ENCODE measurements at regions of chr6 and their contacts with region 1.

Region 1: GRCh38 chr6:157021993-157022740 is 245.0 kb downstream of the ARID1B start:
- DNase-seq: peak; percentile 31
- ATAC-seq: peak; percentile 75
- H3K4me3 ChIP-seq: peak overlapping the region; percentile 75 to 79
- H3K27ac ChIP-seq: peak overlapping the region; percentile 81
- H3K4me1 ChIP-seq: peaks cover 5 to 14% of the 10 kb centered on the region in 2 experiments
- H3K27me3 ChIP-seq: no peaks in the 10 kb centered on the region
- CTCF ChIP-seq: no peak
- POLR2A ChIP-seq: peak; percentile 28
- RAD21 ChIP-seq: no peak

Region 2: DNA sequence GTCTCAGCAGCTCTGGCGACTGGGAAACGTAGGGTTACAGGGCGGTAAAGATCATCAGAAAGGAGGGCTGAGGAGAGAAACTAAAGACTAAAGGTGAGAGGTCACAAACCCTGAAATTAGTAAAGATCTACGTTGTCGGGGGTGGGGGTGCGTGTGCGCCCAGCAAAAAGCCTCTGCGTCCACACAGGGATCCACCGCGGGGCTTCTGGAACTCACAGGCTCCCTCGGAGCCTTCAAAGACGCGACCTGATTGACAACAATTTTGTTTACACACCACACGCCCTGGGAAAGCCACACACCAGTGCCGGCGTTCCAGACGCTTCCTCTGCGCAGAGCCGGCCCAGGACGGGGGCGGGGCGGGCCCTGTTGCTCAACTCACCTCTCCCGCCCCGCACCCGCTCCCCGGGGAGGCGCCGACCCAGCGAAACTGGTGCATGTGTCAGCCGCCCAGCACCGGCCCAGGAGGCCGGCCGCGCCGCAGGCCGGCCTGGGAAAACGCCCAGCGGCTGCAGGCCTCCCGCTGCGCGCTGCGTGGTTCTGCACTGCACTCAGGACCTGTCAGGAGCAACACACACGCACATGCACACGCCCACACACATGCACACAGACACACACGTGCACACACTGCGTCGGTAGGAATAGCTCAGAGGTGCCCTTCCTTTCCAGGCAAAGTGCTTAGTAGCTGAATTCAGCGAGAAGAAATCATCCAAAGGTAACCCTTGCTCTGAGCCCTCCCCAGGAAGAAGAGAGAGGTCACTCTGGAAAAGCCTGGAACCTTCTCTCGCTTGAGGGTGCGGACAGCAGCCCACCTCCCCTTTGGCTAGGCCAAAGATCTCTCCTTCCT is 302.2 kb before region 1 on chr6:
- CTCF ChIA-PET with region 1: no interaction called
- POLR2A ChIA-PET with region 1: no interaction called
- RAD21 ChIA-PET with region 1: no interaction called
- intact Hi-C with region 1: loop called (anchors 2 kb)
- DNase-seq: peak; percentile 72
- ATAC-seq: peak; percentile 90
- H3K4me3 ChIP-seq: peak overlapping the region; percentile 29 to 40
- H3K27ac ChIP-seq: peak overlapping the region; percentile 71
- H3K4me1 ChIP-seq: peaks cover 32 to 34% of the 10 kb centered on the region in 2 experiments
- H3K27me3 ChIP-seq: no peaks in the 10 kb centered on the region
- CTCF ChIP-seq: no peak
- POLR2A ChIP-seq: peak; percentile 41
- RAD21 ChIP-seq: 0 out of 2 replicates have a peak, but pooled peaks have one; percentile 10